ENCODE measurements at regions of chr17 and their contacts with region 1.

Region 1: GRCh38 chr17:35900708-35901480 is 20.7 kb upstream of the CCL5 start:
- DNase-seq: no peak
- CTCF ChIP-seq: no peak

Region 2: GRCh38 chr17:35540589-35541404 is 360.1 kb before region 1 on chr17:
- CTCF ChIA-PET with region 1: no interaction called
- POLR2A ChIA-PET with region 1: no interaction called
- DNase-seq: no peak
- CTCF ChIP-seq: no peak

Region 3: DNA sequence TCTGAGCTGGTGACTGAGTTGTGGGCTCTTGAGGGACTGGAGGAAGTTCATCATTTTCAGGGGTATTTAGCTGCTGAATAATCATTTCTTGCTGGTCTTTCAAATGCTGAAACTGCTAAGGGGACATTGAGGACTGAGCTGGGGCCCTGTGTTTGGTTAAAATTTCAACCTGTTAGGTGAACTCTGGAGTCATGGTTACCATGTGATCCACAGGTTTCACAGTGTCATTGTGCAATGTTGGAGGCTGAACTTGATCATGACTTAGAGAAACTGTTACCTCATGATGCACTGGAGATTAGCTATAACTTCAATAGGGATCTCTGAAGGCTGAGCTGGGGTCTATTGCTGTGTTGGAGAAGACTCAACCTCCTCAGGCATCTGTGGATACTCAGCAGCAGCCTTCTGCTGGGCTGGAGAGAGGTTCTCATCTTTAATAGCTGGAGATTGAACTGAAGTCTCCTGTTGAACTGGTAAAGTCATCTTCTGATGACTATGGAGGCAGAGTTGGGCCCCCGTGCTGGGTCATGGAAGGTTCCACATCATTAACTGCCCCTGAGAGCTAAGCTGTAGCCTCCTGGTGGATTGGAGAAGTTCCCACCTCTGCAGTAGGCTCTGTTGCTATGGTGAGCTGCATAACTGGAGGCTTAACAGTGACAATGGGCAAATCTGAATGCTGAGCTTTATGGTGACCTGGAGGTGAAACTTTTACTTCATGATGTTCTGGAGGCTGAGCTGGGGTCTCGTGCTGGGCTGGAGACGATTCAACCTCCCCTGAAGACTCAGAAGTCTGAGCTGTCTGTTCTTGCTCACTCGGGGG is 14.5 kb after region 1 on chr17:
- CTCF ChIA-PET with region 1: interaction called, 13 read pairs
- POLR2A ChIA-PET with region 1: no interaction called
- DNase-seq: no peak
- CTCF ChIP-seq: no peak

Region 4: GRCh38 chr17:35942588-35943186 is 41.8 kb after region 1 on chr17:
- CTCF ChIA-PET with region 1: no interaction called
- POLR2A ChIA-PET with region 1: no interaction called
- DNase-seq: no peak
- CTCF ChIP-seq: no peak

Region 5: DNA sequence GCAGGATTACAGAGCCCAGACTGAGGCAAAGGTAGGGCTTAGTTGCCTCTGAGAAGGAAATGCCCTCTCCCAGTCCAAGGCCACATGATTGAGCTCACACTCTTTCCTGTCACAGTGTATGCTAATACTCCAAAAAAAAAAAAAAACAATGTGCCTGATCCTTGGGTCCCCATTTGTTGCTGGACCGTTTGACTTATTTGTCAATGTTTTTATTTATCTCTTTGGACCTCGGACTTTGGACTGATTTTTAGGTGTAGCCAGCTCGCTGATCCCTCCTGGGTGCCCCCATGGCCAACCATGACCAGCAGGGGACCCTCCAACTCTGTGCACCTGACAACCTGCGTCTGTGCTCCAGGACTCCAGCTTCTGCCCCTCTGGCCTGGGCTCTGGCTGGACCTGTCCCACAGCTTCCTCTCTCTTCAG is 81.0 kb after region 1 on chr17:
- CTCF ChIA-PET with region 1: no interaction called
- POLR2A ChIA-PET with region 1: no interaction called
- DNase-seq: no peak
- CTCF ChIP-seq: peak; percentile 35

Region 6: DNA sequence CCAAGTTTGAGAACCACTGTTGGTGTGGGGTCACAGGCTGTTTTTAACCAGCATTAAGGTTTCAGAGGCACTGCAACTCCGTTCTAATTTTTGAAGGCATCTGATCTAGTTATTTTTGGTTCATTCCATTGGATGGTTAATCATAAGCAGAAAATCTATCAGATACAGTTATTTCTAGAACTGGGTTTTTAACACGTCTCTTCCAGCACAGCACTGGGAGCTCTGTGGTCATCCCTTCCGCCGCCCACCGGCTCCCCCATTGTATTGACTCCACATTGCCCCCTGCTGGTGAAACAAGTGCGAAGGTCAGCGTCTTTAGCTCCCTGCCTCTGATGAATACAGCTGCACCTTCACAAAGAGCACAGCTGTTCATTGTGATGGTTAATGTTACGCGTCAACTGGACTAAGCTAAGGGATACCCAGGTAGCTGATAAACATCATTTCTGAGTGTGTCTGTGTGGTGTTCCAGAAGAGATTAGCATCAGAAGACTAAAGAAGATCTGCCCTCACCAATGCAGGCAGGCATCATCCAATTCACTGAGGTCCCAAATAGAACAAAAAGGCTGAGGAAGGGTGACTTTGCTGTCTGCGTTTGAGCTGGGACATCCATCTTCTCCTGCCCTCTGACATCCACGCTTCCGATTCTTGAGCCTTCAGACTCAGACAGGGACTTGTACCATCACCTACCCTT is 171.7 kb after region 1 on chr17:
- CTCF ChIA-PET with region 1: no interaction called
- POLR2A ChIA-PET with region 1: no interaction called
- DNase-seq: peak; percentile 77
- CTCF ChIP-seq: peak; percentile 67

Measured in GM10248 (cell line).